Activated naive CD8-positive, alpha-beta T cell treated with anti-CD3 and anti-CD28 coated beads, Interleukin-2, amount 10 ng/mL, durations not matched to agents 7 days and 5 days (primary cell): ENCODE measurements at regions of chr4 and their contacts with region 1.

Region 1: GRCh38 chr4:10116580-10117358 is at the start of gene WDR1:
- DNase-seq: peak; percentile 93
- ATAC-seq: peak; percentile 85
- H3K4me3 Mint-ChIP-seq: peak within 1 kb of the TSS; percentile 97
- H3K27ac Mint-ChIP-seq: peak within 1 kb of the TSS; percentile 100
- H3K4me1 Mint-ChIP-seq: peaks cover 51% of the 10 kb centered on the region
- H3K27me3 Mint-ChIP-seq: no peaks in the 10 kb centered on the region
- total RNA-seq, gene WDR1: 371 to 372 TPM

Region 2: DNA sequence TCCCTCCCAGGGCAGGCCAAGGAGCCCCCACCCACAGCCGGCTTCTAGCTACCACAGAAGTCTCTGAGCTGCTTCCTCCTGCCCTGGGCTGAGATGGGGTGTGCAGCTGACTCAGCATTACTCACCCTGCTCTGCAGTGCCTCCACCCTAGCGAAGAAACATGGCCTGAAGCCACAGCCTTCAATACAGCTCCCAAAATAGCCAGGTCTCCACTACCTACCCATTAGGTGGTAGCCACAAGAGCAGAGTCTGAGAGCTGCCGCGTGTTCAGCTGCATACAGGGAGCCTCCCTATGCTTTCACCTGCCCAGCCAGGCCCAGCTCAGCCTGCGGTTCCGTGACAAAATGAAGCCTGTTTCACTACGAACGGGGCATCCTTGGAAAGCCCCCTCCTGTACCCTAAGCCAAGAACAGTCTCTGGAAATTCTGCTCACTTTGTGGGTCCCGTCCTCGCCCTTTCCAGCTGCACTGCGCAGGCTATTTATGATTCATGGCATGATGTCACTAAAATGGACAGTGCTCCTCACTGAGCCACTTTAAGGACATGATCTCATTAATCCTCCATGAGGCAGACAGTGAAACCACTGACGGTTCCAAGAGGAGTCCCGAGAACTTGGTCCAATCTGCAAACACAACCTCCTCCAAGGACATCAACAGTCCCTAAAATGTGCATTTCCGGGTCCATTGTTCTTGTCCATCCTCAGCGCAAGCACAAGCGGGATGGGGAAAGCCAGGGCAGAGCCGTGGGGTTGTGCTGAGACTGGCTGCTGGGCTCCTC is 20.4 kb before region 1 on chr4:
- POLR2A ChIA-PET with region 1: interaction called, 104 read pairs
- DNase-seq: peak; percentile 71
- ATAC-seq: peak; percentile 83
- H3K4me3 Mint-ChIP-seq: peak overlapping the region; percentile 68
- H3K27ac Mint-ChIP-seq: peak overlapping the region; percentile 91
- H3K4me1 Mint-ChIP-seq: peaks cover 84% of the 10 kb centered on the region
- H3K27me3 Mint-ChIP-seq: no peaks in the 10 kb centered on the region

Region 3: DNA sequence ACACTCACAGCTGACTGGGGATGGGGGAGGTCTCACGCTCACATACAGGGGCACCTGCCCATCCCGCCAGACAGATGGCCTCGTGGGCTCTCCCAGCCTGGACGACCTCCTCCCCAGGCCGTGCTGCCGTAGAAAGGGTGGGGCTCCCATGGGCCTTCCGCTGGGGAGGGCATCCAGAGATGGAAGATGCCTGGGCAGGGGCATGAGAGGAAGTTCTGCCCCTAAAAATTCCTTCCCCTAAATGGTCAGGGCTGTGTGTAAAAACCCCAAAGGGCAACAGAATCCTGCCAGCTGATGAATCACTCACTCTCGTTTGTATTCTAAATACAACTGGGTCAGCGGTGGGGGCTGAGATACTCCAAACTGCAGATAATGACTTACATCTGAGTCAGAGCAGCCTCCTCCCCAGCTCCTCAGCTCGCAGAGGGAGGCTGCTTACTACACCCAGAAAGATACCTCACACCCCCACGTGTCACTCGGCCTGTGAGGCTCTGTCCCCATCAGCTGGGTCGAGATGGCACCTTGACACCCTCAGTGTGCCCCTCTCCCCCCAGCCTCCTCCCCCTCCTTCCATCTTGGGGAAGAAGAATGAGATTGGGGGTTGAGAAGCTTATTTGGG is 10.2 kb before region 1 on chr4:
- POLR2A ChIA-PET with region 1: interaction called, 44 read pairs
- DNase-seq: no peak
- ATAC-seq: peak; percentile 69
- H3K4me3 Mint-ChIP-seq: peak overlapping the region; percentile 51
- H3K27ac Mint-ChIP-seq: peak overlapping the region; percentile 79
- H3K4me1 Mint-ChIP-seq: peaks cover 90% of the 10 kb centered on the region
- H3K27me3 Mint-ChIP-seq: no peaks in the 10 kb centered on the region

Region 4: DNA sequence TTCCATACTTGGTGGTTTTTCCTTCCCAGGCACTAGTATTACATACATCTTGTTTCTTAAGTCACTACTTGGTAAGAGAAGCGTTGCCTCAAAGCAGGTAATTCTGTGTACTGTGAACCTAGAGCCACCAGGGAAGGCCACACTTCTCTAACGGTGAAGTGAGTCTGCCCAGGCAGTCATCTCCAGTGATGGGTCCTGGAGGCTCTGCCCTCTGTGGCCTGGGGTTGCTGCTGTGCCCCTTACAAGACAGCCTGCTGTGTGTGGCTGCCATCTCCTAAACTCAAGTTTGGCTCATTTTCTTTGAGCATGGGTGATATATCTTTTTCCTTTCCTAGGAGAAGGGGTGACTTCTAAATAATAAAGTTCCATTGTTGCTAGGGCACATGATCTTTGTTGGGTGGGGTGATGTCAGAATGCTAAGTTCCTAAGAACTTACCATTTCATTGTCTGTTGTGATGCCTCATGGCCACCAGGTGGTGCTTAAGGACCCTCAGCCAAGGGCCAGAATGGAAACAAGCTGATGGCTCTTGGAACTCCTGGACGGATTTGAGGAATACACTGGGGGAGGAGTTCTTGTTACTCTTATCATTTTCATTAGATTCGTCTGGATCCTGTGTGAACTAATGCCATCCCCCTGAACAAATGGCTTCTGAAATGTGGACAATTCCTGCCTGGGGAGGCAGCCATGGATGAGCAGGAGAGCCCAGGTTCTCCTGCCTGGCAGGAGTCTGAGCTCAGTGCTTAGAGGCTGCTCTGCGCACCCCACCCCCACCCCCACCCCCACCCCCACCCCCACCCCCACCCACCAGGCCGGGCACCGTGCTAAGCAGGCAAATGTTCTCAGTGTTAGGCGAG is 40.9 kb after region 1 on chr4:
- POLR2A ChIA-PET with region 1: interaction called, 18 read pairs
- DNase-seq: peak; percentile 43
- ATAC-seq: no peak
- H3K4me3 Mint-ChIP-seq: no peak overlapping the region
- H3K27ac Mint-ChIP-seq: no peak overlapping the region
- H3K4me1 Mint-ChIP-seq: peaks cover 29% of the 10 kb centered on the region
- H3K27me3 Mint-ChIP-seq: peaks cover 2% of the 10 kb centered on the region

Region 5: DNA sequence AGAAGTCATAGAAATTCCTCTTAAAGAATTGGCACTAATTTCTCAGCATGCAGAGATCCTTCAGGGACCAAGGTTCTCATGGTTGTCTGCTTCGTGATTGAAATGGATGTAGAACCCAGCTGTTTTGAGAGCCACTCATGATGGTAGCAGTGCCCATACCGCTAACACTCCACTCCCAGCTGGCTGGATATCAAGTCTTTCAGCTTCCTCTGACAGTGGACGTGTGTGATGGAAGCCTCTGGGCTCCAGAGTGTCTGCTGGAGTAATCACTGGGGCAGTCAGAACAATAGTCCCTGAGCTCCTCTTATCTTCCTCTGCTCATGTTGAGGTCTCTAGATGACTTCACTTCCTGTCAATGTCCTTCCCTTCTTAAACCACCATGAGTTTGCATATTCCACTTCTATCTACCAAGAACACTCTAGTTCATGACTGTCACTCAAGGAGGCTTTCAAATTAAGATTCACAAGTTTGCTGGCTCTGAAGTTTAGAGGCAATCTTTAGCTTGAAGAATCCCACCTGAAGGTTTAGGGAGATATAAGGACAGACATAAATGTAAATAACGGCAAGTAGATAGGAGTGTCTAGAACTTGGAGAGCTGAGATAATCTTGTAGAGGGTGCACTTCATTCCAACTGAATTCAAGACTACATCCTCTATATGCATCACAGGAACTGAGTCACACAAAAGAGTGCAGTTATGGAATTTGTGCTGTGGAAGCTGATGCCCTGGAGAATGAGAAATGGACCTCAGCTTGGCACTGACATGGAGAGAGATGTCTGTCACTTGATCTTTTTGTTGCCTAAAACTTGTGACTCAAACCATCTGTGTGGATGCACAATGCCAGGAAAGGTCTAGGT is 64.4 kb after region 1 on chr4:
- POLR2A ChIA-PET with region 1: interaction called, 26 read pairs
- DNase-seq: peak; percentile 51
- ATAC-seq: peak; percentile 91
- H3K4me3 Mint-ChIP-seq: peak overlapping the region; percentile 63
- H3K27ac Mint-ChIP-seq: peak overlapping the region; percentile 93
- H3K4me1 Mint-ChIP-seq: peaks cover 48% of the 10 kb centered on the region
- H3K27me3 Mint-ChIP-seq: no peaks in the 10 kb centered on the region

Region 6: GRCh38 chr4:10416441-10416840 is 299.7 kb after region 1 on chr4:
- POLR2A ChIA-PET with region 1: interaction called, 11 read pairs
- DNase-seq: peak; percentile 64
- ATAC-seq: peak; percentile 95
- H3K4me3 Mint-ChIP-seq: peak overlapping the region; percentile 62
- H3K27ac Mint-ChIP-seq: peak overlapping the region; percentile 31
- H3K4me1 Mint-ChIP-seq: peaks cover 38% of the 10 kb centered on the region
- H3K27me3 Mint-ChIP-seq: peaks cover 3% of the 10 kb centered on the region

Region 7: GRCh38 chr4:10461091-10461849 is 344.5 kb after region 1 on chr4:
- POLR2A ChIA-PET with region 1: interaction called, 11 read pairs
- DNase-seq: peak; percentile 94
- ATAC-seq: peak; percentile 81
- H3K4me3 Mint-ChIP-seq: peak overlapping the region; percentile 79
- H3K27ac Mint-ChIP-seq: no peak overlapping the region
- H3K4me1 Mint-ChIP-seq: peaks cover 17% of the 10 kb centered on the region
- H3K27me3 Mint-ChIP-seq: peaks cover 28% of the 10 kb centered on the region